PC-3 (cell line): ENCODE measurements at regions of chr2 and their contacts with region 1.

Region 1: DNA sequence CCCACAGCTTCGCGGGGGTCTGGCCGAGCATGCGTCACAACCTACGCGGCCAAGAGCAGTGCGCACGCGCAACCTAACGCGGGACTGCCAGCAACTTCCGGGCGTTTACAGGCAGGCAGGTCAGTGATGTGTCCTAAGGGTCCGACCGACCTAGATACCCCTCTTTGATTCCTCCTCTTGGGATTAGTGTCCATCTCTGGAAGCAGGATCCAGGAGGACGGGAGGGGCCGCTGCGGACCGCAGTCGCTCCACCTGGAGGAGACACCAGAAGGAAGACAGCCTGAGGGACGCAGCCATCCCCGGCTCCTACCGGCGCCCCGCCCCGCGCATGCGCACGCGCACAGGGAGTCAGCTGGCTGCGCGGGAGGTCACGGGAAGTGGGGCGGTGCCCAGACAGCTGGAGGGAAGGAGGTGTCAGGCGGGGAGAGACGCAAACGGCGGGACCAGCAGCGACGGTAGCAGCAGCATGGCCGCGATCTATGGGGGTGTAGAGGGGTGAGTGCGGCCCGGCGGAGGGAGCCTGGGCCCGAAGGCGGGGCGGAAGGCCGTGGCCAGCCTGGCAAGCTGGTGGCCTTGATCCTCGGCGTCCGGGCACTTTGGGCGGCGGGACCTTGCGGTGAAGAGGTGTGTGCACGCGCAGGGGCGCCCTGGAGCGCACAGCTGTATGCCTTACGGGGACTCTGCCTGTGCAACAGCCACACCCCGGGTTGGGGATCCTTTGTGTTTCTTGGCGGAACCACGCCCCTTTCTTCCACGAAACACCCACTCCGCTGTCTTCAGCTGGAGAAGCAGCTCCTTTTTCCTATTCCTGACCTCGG is at the start of gene NAGK:
- DNase-seq: peak; percentile 94
- ATAC-seq: peak; percentile 81
- H3K4me3 ChIP-seq: peak within 1 kb of the TSS; percentile 84
- H3K27ac ChIP-seq: peak within 1 kb of the TSS; percentile 75
- H3K4me1 ChIP-seq: peaks cover 41% of the 10 kb centered on the region
- H3K27me3 ChIP-seq: no peaks in the 10 kb centered on the region; the same call in 1 of the 2 replicates
- CTCF ChIP-seq: no peak
- total RNA-seq, gene NAGK: 55.5 and 70.5 TPM in 2 replicates

Region 2: DNA sequence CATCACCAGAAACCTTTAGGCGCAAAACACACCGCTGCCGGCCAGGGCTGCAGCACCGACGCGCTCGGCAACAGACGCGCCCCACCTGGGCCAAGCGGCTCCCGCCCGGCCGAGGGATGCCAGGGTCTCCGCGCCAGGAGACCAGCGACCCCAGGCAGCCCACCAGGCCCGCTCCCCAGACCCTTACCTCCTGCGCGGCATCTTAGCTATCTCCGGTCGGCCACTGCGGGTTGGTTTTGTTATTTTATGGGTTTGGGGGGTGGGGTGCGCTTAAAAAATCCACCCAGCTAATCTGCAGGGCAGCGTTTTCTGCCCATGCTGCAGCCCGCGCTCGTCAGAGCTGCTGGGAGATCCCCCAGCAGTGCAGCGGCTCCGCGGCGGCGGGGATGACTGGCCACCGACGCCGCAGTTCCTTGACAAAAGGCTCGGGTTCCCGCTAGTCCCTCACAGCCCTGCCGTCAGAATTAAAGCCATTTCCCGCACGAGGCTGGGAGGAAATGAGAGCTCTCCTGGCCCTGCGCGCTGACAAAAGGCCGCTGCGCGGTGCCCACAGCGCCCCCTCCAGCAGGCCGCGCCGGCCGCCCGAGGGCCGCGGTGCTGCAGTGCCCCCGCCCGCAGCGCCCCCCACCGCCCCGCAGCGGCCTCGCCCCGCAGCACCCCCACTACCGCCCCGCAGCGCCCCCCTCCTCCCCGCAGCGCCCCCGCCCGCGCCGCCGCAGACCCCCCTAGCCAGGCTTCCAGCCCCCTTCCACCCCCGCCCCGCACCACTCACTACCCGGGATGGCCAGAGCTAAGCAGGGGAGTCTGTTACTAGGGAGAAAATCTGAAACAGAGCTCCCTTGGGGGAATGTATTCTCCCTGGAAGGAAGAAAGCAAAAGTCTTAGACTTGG is 300.5 kb before region 1 on chr2 and contains the start of gene ADD2:
- CTCF ChIA-PET with region 1: no interaction called
- POLR2A ChIA-PET with region 1: no interaction called
- intact Hi-C with region 1: no loop called
- DNase-seq: peak; percentile 22
- ATAC-seq: peak; percentile 77
- H3K4me3 ChIP-seq: peak within 1 kb of the TSS; percentile 56
- H3K27ac ChIP-seq: no peak within 1 kb of the TSS
- H3K4me1 ChIP-seq: no peaks in the 10 kb centered on the region
- H3K27me3 ChIP-seq: peaks cover 84% of the 10 kb centered on the region
- CTCF ChIP-seq: peak; percentile 19; the same call in 1 of the 2 replicates
- total RNA-seq, gene ADD2: 4.4 and 16.0 TPM in 2 replicates

Region 3: DNA sequence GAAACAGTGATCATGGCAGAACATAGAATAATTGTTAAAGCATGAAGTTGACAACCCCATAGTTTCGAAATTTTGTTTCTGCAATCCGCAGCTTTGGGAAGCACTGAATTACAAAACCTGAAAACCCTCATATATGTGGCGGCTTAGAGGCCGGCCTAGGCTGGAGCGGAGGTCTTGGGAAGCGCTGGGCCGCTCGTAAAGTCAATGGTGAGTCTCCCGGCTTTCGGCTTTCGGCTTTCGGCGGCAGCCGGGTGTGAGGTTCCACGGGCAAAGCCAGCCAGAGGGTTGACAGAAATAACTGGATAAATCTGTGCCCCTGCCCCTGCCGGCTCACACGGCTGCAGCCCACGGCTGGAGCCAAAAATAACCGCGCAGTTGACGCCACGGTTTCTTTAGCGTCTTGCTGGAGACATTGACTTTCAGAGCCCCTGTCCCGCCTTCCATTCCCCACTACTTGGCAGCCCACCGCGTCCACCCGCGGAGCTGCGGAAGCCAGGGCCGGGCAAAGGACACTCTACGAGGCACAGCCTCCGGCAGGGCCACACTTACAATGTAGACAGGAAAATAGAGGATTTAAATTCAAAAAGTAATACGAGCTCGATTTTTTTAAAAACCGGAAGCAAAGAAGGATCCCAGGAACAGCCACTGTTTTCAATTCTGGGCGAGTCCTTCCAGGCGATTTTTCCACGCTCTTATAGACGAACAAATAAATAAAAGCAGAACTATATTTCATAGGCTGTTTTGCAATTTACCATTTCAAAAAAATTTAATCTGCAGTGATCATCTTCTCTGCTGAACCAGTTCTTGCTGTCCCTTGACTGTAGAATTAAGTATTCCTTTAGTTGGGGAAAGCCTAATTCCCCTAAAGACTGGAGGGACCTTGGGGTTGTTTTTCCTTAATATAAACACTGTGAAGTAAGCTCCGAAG is 161.0 kb before region 1 on chr2:
- CTCF ChIA-PET with region 1: no interaction called
- POLR2A ChIA-PET with region 1: no interaction called
- intact Hi-C with region 1: no loop called
- DNase-seq: no peak
- ATAC-seq: no peak
- H3K4me3 ChIP-seq: no peak overlapping the region
- H3K27ac ChIP-seq: no peak overlapping the region
- H3K4me1 ChIP-seq: no peaks in the 10 kb centered on the region
- H3K27me3 ChIP-seq: 0 out of 2 replicates have a peak, but pooled peaks cover 6% of the 10 kb centered on the region
- CTCF ChIP-seq: no peak

Region 4: GRCh38 chr2:71117063-71117462 is 48.6 kb after region 1 on chr2:
- CTCF ChIA-PET with region 1: no interaction called
- POLR2A ChIA-PET with region 1: interaction called, 16 read pairs
- intact Hi-C with region 1: no loop called
- DNase-seq: no peak
- ATAC-seq: no peak
- H3K4me3 ChIP-seq: no peak overlapping the region
- H3K27ac ChIP-seq: no peak overlapping the region
- H3K4me1 ChIP-seq: no peaks in the 10 kb centered on the region
- H3K27me3 ChIP-seq: no peaks in the 10 kb centered on the region
- CTCF ChIP-seq: no peak

Region 5: GRCh38 chr2:71130113-71130904 is 61.9 kb after region 1 on chr2 and contains the starts of genes MCEE and MPHOSPH10:
- CTCF ChIA-PET with region 1: interaction called, 3 read pairs
- POLR2A ChIA-PET with region 1: no interaction called
- intact Hi-C with region 1: loop called (anchors 1 kb)
- DNase-seq: peak; percentile 94
- ATAC-seq: peak; percentile 93
- H3K4me3 ChIP-seq: peak within 1 kb of the TSS; percentile 93
- H3K27ac ChIP-seq: peak within 1 kb of the TSS; percentile 87
- H3K4me1 ChIP-seq: peaks cover 15% of the 10 kb centered on the region
- H3K27me3 ChIP-seq: no peaks in the 10 kb centered on the region
- CTCF ChIP-seq: no peak
- total RNA-seq, gene MCEE: 10.9 and 15.3 TPM in 2 replicates
- total RNA-seq, gene MPHOSPH10: 26.4 and 28.0 TPM in 2 replicates

Region 6: DNA sequence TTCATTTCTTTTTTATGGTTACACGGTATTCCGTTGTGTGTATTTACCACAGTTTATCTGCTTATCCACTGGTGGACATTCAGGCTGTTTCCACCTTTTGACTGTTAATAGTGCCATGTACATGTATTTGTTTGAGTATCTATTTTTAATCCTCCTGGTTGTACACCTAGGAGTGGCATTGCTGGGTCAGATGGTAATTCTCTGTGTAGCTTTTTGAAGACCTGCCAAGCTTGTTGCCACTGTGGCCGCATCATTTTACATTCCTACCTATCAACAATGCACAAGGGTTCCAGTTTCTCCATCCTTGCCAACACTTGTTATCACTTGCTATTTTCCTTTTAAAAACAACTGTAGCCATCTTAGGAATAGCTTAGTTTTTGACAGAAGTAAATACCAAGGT is 75.4 kb after region 1 on chr2:
- CTCF ChIA-PET with region 1: no interaction called
- POLR2A ChIA-PET with region 1: interaction called, 15 read pairs
- intact Hi-C with region 1: no loop called
- DNase-seq: no peak
- ATAC-seq: no peak
- H3K4me3 ChIP-seq: no peak overlapping the region
- H3K27ac ChIP-seq: no peak overlapping the region
- H3K4me1 ChIP-seq: no peaks in the 10 kb centered on the region
- H3K27me3 ChIP-seq: no peaks in the 10 kb centered on the region
- CTCF ChIP-seq: no peak

Region 7: DNA sequence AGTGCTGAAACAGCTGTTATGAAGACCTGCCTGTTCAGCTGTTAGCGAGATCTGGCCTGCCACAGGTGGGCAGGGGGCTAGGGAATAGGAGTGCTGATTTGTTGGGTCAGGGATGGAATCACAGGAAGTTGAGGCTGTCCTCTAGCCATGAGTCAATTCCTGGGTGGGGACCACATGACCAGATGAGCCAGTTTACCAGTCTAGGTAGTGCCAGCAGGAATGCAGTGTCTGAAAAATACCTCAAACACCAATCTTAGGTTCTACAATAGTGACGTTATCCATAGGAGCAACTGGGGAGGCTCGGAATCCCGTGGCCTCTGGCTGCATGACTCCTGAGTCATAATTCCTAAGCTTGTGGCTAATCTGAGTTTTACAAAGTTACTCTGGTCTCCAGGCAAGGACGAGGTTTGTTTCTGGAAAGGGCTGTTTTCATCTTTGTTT is 429.9 kb after region 1 on chr2:
- CTCF ChIA-PET with region 1: no interaction called
- POLR2A ChIA-PET with region 1: no interaction called
- intact Hi-C with region 1: no loop called
- DNase-seq: peak; percentile 97
- ATAC-seq: peak; percentile 96
- H3K4me3 ChIP-seq: peak overlapping the region; percentile 42; the same call in 1 of the 2 replicates
- H3K27ac ChIP-seq: peak overlapping the region; percentile 86
- H3K4me1 ChIP-seq: peaks cover 42% of the 10 kb centered on the region
- H3K27me3 ChIP-seq: no peaks in the 10 kb centered on the region
- CTCF ChIP-seq: no peak